Naive thymus-derived CD4-positive, alpha-beta T cell (primary cell): ENCODE measurements at regions of chr12 and their contacts with region 1.

Region 1: GRCh38 chr12:1583421-1584078 is 10.8 kb downstream of the FBXL14 start:
- DNase-seq: peak in 8 of 9 donors; percentile 42 to 73 (median 64)
- ATAC-seq: peak; percentile 84
- H3K4me3 ChIP-seq: no peak overlapping the region
- H3K4me3 Mint-ChIP-seq: peak overlapping the region in 4 of 10 donors; percentile 17 to 64 (median 44)
- H3K27ac ChIP-seq: no peak overlapping the region
- H3K27ac Mint-ChIP-seq: peak overlapping the region in 6 of 9 donors; percentile 1 to 66 (median 48)
- H3K4me1 ChIP-seq: peaks cover 6 to 13% of the 10 kb centered on the region in 2 donors
- H3K4me1 Mint-ChIP-seq: peaks cover 15 to 26% (median 23%) of the 10 kb centered on the region in 7 donors
- H3K27me3 ChIP-seq: no peaks in the 10 kb centered on the region
- H3K27me3 Mint-ChIP-seq: peaks cover 0 to 3% (median 0%) of the 10 kb centered on the region in 5 donors

Region 2: DNA sequence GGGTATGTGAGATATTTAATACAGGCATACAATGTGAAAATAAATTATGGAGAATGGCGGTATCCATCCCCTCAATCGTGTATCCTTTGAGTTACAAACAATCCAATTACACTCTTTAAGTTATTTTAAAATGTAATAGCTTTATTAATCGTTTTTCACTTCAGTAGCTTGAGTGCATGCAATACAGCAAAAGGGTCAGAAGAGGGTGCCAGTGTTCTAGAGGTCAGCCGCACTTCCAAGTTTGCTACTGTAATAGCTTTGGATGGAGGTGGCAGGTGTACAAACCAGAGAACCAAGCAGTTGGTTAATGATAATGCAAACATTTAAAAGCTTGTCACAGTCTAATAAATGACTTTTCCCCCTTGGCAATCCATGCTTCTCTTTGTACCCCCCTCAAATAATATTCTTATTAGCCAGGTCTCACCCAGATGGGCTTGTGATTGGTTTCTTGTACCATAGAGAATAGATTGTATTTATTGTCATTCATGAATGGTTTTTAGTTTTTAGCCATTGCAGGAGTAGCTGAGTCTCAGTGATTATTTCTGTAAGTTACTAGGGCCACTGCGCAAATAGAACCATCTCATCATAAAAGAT is 465.5 kb before region 1 on chr12:
- CTCF ChIA-PET with region 1: interaction called, 108 read pairs
- POLR2A ChIA-PET with region 1: interaction called, 12 read pairs
- intact Hi-C with region 1: loop called (anchors 1 kb)
- DNase-seq: peak; percentile 25 to 70 (median 63)
- ATAC-seq: peak; percentile 74
- H3K4me3 ChIP-seq: no peak overlapping the region
- H3K4me3 Mint-ChIP-seq: no peak overlapping the region
- H3K27ac ChIP-seq: no peak overlapping the region
- H3K27ac Mint-ChIP-seq: no peak overlapping the region
- H3K4me1 ChIP-seq: peaks cover 4 to 7% of the 10 kb centered on the region in 2 donors
- H3K4me1 Mint-ChIP-seq: peaks cover 7 to 16% (median 9%) of the 10 kb centered on the region in 7 donors
- H3K27me3 ChIP-seq: no peaks in the 10 kb centered on the region
- H3K27me3 Mint-ChIP-seq: no peaks in the 10 kb centered on the region

Region 3: GRCh38 chr12:1279050-1279449 is 304.5 kb before region 1 on chr12:
- CTCF ChIA-PET with region 1: no interaction called
- POLR2A ChIA-PET with region 1: no interaction called
- intact Hi-C with region 1: loop called in 1 of 2 experiments (anchors 10 kb)
- DNase-seq: no peak
- ATAC-seq: no peak
- H3K4me3 ChIP-seq: no peak overlapping the region
- H3K4me3 Mint-ChIP-seq: no peak overlapping the region
- H3K27ac ChIP-seq: no peak overlapping the region
- H3K27ac Mint-ChIP-seq: peak overlapping the region in 1 of 9 donors; percentile 27
- H3K4me1 ChIP-seq: no peaks in the 10 kb centered on the region
- H3K4me1 Mint-ChIP-seq: peaks cover 5 to 22% (median 13%) of the 10 kb centered on the region in 7 donors
- H3K27me3 ChIP-seq: no peaks in the 10 kb centered on the region
- H3K27me3 Mint-ChIP-seq: no peaks in the 10 kb centered on the region

Region 4: GRCh38 chr12:1488908-1489381 is 94.6 kb before region 1 on chr12:
- CTCF ChIA-PET with region 1: no interaction called
- POLR2A ChIA-PET with region 1: no interaction called
- intact Hi-C with region 1: loop called in 1 of 2 experiments (anchors 10 kb)
- DNase-seq: peak in 7 of 9 donors; percentile 28 to 72 (median 61)
- ATAC-seq: peak; percentile 80
- H3K4me3 ChIP-seq: no peak overlapping the region
- H3K4me3 Mint-ChIP-seq: peak overlapping the region; percentile 49 to 83 (median 68)
- H3K27ac ChIP-seq: peak overlapping the region; percentile 65
- H3K27ac Mint-ChIP-seq: peak overlapping the region; percentile 43 to 97 (median 95)
- H3K4me1 ChIP-seq: peaks cover 0 to 23% of the 10 kb centered on the region in 2 donors
- H3K4me1 Mint-ChIP-seq: peaks cover 12 to 46% (median 33%) of the 10 kb centered on the region in 7 donors
- H3K27me3 ChIP-seq: no peaks in the 10 kb centered on the region
- H3K27me3 Mint-ChIP-seq: no peaks in the 10 kb centered on the region

Region 5: GRCh38 chr12:1533602-1534304 is 49.8 kb before region 1 on chr12:
- CTCF ChIA-PET with region 1: interaction called, 3 read pairs
- POLR2A ChIA-PET with region 1: interaction called, 4 read pairs
- intact Hi-C with region 1: loop called in 1 of 2 experiments (anchors 2 kb)
- DNase-seq: peak in 6 of 9 donors; percentile 12 to 68 (median 30)
- ATAC-seq: peak; percentile 58
- H3K4me3 ChIP-seq: peak overlapping the region; percentile 48
- H3K4me3 Mint-ChIP-seq: peak overlapping the region; percentile 81 to 89 (median 85)
- H3K27ac ChIP-seq: no peak overlapping the region
- H3K27ac Mint-ChIP-seq: peak overlapping the region in 1 of 9 donors; percentile 40
- H3K4me1 ChIP-seq: peaks cover 32 to 34% of the 10 kb centered on the region in 2 donors
- H3K4me1 Mint-ChIP-seq: peaks cover 25 to 38% (median 29%) of the 10 kb centered on the region in 7 donors
- H3K27me3 ChIP-seq: peaks cover 19 to 36% of the 10 kb centered on the region in 2 donors
- H3K27me3 Mint-ChIP-seq: peaks cover 63 to 80% (median 77%) of the 10 kb centered on the region in 5 donors

Region 6: GRCh38 chr12:1644534-1645438 is 61.2 kb after region 1 on chr12:
- CTCF ChIA-PET with region 1: no interaction called
- POLR2A ChIA-PET with region 1: no interaction called
- intact Hi-C with region 1: no loop called
- DNase-seq: no peak
- ATAC-seq: no peak
- H3K4me3 ChIP-seq: no peak overlapping the region
- H3K4me3 Mint-ChIP-seq: peak overlapping the region in 1 of 10 donors; percentile 40
- H3K27ac ChIP-seq: no peak overlapping the region
- H3K27ac Mint-ChIP-seq: no peak overlapping the region
- H3K4me1 ChIP-seq: no peaks in the 10 kb centered on the region
- H3K4me1 Mint-ChIP-seq: peaks cover 0 to 7% (median 0%) of the 10 kb centered on the region in 7 donors
- H3K27me3 ChIP-seq: no peaks in the 10 kb centered on the region
- H3K27me3 Mint-ChIP-seq: peaks cover 0 to 25% (median 7%) of the 10 kb centered on the region in 5 donors